Activated CD8-positive, alpha-beta T cell treated with anti-CD3 and anti-CD28 coated beads for 36 hours (primary cell): ENCODE measurements at regions of chr9 and their contacts with region 1.

Region 1: DNA sequence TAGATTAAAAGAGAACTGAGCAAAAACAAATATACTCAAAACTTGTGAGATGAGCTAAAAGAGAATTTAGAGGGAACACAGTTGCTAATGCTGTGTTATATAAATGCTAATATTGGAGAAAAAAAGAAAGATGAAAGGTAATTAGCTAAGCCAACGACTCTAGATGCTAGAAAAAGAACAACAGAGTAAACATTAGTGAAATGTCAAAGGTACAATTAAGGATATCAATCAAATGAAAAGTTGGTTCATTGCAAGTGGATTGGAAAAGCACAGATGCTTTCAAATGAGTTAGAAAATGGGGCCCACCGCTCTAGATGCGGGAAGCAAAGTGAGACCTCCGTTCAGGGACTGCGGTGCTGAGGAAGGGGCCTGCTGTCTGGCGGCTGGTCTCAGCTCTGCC is 17.9 kb upstream of the BARHL1 start:
- DNase-seq: no peak
- ATAC-seq: no peak
- H3K4me3 Mint-ChIP-seq: no peak overlapping the region
- H3K27ac Mint-ChIP-seq: no peak overlapping the region
- H3K4me1 Mint-ChIP-seq: no peaks in the 10 kb centered on the region
- H3K27me3 Mint-ChIP-seq: peaks cover 25% of the 10 kb centered on the region
- CTCF ChIP-seq: no peak

Region 2: DNA sequence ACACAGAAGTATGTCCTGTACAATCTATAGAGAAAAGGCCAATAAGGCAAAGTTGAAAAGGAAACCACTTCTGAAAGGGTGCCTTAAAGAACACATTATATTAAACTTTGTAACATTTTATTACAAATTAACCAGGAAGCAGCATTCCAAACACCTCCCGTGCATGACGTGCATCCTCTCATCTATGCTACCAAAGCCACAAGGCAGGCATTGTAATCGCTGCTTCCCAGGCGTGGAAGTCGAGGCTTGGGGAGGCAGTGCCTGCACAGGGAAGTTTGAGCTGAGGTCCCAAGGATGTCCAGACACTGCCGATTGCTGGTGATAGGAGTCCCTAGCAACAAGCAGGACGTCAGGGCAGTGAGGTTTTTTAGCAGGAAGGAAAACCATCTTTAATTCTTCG is 26.5 kb before region 1 on chr9:
- CTCF ChIA-PET with region 1: no interaction called
- POLR2A ChIA-PET with region 1: no interaction called
- intact Hi-C with region 1: no loop called
- DNase-seq: no peak
- ATAC-seq: no peak
- H3K4me3 Mint-ChIP-seq: no peak overlapping the region
- H3K27ac Mint-ChIP-seq: no peak overlapping the region
- H3K4me1 Mint-ChIP-seq: no peaks in the 10 kb centered on the region
- H3K27me3 Mint-ChIP-seq: no peaks in the 10 kb centered on the region
- CTCF ChIP-seq: no peak

Region 3: GRCh38 chr9:132575005-132575609 is 10.6 kb after region 1 on chr9:
- CTCF ChIA-PET with region 1: interaction called, 16 read pairs
- POLR2A ChIA-PET with region 1: interaction called, 3 read pairs
- intact Hi-C with region 1: no loop called
- DNase-seq: peak; percentile 79
- ATAC-seq: peak; percentile 91
- H3K4me3 Mint-ChIP-seq: no peak overlapping the region
- H3K27ac Mint-ChIP-seq: no peak overlapping the region
- H3K4me1 Mint-ChIP-seq: no peaks in the 10 kb centered on the region
- H3K27me3 Mint-ChIP-seq: peaks cover 49% of the 10 kb centered on the region
- CTCF ChIP-seq: peak; percentile 94

Region 4: GRCh38 chr9:132690696-132691095 is 126.2 kb after region 1 on chr9:
- CTCF ChIA-PET with region 1: no interaction called
- POLR2A ChIA-PET with region 1: no interaction called
- intact Hi-C with region 1: no loop called
- DNase-seq: no peak
- ATAC-seq: no peak
- H3K4me3 Mint-ChIP-seq: no peak overlapping the region
- H3K27ac Mint-ChIP-seq: no peak overlapping the region
- H3K4me1 Mint-ChIP-seq: peaks cover 11% of the 10 kb centered on the region
- H3K27me3 Mint-ChIP-seq: no peaks in the 10 kb centered on the region
- CTCF ChIP-seq: no peak